Activated B cell treated with CpG ODN at 0.5 μM for 24 hours (primary cell): ENCODE measurements at regions of chr1 and their contacts with region 1.

Region 1: DNA sequence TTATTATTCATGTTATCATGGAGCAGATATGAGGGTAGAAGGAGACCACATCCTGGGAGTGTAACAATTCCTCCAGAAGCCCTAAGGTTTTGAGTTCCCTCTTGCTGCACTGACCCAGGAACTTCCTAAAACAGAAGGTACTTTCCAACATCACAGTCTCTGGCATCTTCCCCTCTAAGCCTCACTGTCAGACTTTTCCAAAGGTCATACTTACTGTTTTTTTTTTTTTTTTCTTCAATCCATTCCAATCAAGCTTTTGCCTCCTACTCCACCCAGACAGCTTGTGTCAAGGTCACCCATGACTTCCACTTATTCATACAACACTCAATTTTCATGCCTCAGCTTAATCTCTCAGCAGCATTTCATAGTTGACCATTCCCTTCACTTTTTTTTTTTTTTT is 18.4 kb upstream of the UQCRHL start:
- DNase-seq: no peak
- ATAC-seq: no peak
- H3K4me3 Mint-ChIP-seq: no peak overlapping the region
- H3K27ac Mint-ChIP-seq: peak overlapping the region; percentile 54
- H3K4me1 Mint-ChIP-seq: peaks cover 42% of the 10 kb centered on the region
- H3K27me3 Mint-ChIP-seq: no peaks in the 10 kb centered on the region
- CTCF ChIP-seq: no peak

Region 2: GRCh38 chr1:15866721-15867201 is 41.0 kb after region 1 on chr1:
- CTCF ChIA-PET with region 1: no interaction called
- POLR2A ChIA-PET with region 1: interaction called, 12 read pairs
- intact Hi-C with region 1: no loop called
- DNase-seq: no peak
- ATAC-seq: no peak
- H3K4me3 Mint-ChIP-seq: no peak overlapping the region
- H3K27ac Mint-ChIP-seq: no peak overlapping the region
- H3K4me1 Mint-ChIP-seq: peaks cover 54% of the 10 kb centered on the region
- H3K27me3 Mint-ChIP-seq: no peaks in the 10 kb centered on the region
- CTCF ChIP-seq: no peak

Region 3: DNA sequence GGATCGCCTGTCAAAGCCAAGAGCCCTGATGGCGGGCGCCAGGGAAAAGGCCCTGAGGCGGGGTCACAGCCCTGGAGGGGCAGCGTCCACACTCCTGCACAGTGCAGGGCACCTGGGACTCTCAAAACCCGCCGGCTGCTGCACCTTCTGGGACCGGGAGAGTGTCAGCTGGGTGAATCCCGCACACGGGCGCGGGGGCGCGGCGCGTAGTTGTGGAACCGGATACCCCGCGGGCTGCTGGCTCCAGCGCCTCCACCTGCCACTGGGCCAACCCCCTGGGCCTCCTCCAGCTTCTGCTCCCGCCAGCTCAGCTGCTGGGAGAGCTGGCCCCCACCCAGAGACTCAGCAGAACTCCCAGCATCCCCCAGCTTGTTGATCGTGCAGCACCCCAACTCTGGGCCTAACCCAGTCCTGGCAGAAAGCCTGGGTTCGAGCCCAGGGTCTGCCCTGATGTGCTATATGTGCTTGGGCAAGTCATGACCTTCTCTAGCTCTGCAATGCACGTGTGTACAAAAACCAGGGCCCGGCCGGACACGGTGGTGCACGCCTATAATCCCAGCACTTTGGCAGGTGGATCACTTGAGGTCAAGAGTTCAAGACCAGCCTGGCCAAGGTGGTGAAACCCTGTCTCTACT is 648.5 kb after region 1 on chr1:
- CTCF ChIA-PET with region 1: no interaction called
- POLR2A ChIA-PET with region 1: interaction called, 10 read pairs
- intact Hi-C with region 1: no loop called
- DNase-seq: no peak
- ATAC-seq: no peak
- H3K4me3 Mint-ChIP-seq: no peak overlapping the region
- H3K27ac Mint-ChIP-seq: no peak overlapping the region
- H3K4me1 Mint-ChIP-seq: no peaks in the 10 kb centered on the region
- H3K27me3 Mint-ChIP-seq: no peaks in the 10 kb centered on the region
- CTCF ChIP-seq: no peak